AG04449 (cell line): ENCODE measurements at regions of chr12 and their contacts with region 1.

Region 1: DNA sequence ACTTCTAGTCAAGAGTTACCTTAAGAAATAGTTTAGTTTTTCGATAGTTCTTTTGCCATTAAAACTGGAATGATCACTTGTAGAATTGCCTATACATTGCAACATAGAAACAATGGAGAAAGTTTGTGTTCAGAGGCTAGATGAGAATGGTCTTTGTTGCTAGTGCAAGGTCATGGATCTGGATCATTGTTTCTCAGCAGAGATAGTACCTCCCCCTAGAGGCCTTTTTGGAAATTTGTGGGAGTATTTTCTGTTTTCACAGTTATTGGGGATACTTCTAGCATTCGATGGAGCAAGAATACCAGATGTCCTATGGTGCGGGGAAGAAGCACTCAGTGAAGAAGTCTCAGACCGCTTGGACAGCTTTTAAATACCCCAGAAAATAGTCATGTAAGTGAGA is 138.8 kb upstream of the HMGA2 start:
- DNase-seq: no peak
- H3K4me3 ChIP-seq: no peak overlapping the region
- CTCF ChIP-seq: peak; percentile 28

Region 2: GRCh38 chr12:65415826-65416225 is 269.7 kb before region 1 on chr12:
- CTCF ChIA-PET with region 1: no interaction called
- POLR2A ChIA-PET with region 1: no interaction called
- DNase-seq: no peak
- H3K4me3 ChIP-seq: no peak overlapping the region
- CTCF ChIP-seq: no peak

Region 3: DNA sequence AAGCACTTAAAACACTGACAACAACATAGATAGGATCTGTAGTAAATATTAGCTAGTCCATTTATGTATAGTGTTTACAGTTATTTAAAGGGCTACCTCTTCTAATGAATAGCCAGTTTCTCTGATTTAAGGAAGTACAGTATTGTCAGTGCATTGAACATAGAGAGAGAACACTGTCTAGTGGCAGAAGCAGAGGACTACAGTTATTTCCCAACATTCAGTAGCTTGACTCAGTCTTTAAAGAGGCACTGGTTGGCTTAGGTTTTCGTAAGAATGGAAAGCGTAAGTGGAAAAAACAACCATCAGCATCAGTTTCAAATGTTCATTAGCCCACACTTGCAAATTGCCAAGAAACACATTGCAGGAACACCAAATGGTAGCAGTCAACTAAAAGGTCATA is 13.7 kb after region 1 on chr12:
- CTCF ChIA-PET with region 1: interaction called, 11 read pairs
- POLR2A ChIA-PET with region 1: no interaction called
- DNase-seq: no peak
- H3K4me3 ChIP-seq: no peak overlapping the region
- CTCF ChIP-seq: peak; percentile 56